ENCODE measurements at regions of chr4 and their contacts with region 1.

Region 1: GRCh38 chr4:7630568-7631287 is 196.0 kb upstream of the PSAPL1 start:
- DNase-seq: peak; percentile 86

Region 2: GRCh38 chr4:7472442-7473013 is 158.2 kb before region 1 on chr4:
- intact Hi-C with region 1: no loop called
- DNase-seq: no peak

Region 3: DNA sequence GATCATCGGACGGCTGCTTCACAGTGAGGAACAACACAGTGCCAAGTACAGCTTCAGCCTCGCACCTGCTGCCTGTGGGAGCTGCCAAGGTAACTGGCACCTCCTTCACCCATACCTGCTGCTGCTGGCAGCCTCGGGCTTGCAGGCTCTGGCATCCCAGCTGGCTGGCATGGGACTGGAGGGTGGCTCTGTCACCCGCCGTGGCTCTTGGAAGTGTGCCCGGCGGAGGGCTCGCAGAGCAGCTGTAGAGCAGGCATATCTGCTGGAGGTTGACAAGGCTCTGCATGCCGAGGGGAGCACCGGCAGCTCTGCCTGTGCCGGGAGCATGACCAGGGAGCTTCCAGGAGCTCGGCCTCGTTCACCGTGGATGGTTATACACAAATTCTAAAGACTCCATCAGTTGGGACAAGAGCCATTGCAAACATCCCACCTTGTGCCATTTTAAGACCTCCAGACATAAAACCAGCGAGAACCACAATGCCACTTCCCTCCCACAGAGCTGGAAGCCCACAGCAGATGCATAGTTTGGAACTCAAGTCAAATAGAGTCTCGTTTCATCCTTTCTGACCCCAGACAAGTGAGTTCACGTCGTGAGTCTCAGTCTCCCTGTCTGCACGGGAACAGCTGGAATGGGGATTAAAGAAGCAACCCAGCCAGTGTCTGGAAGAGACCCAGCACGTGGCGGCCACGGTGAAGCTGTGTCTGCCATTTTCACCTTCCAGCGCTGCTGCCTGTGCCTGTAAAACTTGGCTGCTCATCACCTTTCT is 111.7 kb before region 1 on chr4:
- intact Hi-C with region 1: loop called (anchors 2 kb)
- DNase-seq: no peak

Region 4: DNA sequence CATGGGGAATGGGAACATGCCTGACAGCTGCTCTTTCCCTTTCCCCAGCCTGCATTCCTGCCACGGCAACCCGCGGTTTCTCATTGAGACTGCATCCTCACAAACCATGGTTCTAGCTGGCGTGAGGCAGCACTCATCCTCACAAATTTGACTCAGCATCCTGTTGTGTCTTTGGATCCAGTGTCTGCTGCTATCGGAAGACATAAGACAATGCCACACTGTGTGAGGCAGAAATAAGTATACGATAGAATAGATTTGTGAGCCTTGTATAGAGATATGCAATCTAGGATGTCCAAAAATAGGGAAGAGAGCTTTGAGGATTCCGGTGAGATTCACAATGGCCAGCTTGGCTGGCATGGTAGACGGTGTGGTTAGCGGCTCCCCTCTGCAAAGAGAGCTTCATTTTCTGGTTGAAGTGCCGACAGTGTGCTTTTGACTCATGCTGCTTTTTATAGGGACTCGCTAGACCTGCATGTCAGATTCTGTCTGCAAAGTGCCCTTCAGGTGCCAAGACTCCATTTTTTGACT is 34.7 kb before region 1 on chr4:
- intact Hi-C with region 1: loop called (anchors 5 kb)
- DNase-seq: no peak

Region 5: GRCh38 chr4:7792616-7793015 is 161.9 kb after region 1 on chr4:
- intact Hi-C with region 1: no loop called
- DNase-seq: peak; percentile 9